Psoas muscle (tissue), 8 donors: ENCODE measurements at regions of chr1 and their contacts with region 1.

Region 1: DNA sequence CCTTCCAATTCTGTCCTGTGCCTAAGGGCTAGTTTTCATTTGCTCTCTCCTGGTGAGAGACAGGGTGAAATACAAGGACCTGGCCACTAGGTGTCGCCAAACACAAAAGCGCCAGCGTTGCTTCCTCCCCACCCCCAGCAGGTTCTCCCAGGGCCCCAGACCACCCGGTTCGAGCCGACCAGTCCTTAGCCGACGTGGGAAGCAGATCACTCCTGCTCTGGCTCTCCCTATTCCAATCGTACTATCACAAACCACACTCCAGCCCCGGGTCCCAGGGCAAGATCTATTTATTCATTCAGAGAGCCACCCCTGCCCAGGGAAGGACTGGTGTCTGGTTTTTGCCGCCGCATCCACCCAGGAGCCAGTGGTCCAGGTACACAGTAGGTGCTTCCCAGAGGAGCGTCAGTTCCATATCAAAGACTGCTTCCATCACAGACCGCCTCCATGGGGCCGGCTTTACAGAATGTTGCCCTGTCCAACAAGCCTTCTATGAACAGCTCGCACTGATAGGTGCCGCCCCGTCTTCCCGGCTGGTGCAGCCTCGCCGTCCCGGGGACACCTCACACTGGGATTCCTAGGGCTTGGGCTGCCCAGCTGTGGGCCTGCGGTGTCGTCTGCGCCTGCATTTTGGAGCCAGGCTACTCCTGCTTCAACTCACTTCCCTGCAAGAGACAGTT is 35.0 kb downstream of the CTNNBIP1 start:
- DNase-seq: peak; percentile 71 to 81
- ATAC-seq: peak; percentile 77 to 90 (median 81)
- H3K4me3 ChIP-seq: peak overlapping the region; percentile 36
- H3K27ac ChIP-seq: no peak overlapping the region
- H3K4me1 ChIP-seq: peaks cover 28% of the 10 kb centered on the region
- H3K27me3 ChIP-seq: no peaks in the 10 kb centered on the region
- CTCF ChIP-seq: peak; percentile 94

Region 2: DNA sequence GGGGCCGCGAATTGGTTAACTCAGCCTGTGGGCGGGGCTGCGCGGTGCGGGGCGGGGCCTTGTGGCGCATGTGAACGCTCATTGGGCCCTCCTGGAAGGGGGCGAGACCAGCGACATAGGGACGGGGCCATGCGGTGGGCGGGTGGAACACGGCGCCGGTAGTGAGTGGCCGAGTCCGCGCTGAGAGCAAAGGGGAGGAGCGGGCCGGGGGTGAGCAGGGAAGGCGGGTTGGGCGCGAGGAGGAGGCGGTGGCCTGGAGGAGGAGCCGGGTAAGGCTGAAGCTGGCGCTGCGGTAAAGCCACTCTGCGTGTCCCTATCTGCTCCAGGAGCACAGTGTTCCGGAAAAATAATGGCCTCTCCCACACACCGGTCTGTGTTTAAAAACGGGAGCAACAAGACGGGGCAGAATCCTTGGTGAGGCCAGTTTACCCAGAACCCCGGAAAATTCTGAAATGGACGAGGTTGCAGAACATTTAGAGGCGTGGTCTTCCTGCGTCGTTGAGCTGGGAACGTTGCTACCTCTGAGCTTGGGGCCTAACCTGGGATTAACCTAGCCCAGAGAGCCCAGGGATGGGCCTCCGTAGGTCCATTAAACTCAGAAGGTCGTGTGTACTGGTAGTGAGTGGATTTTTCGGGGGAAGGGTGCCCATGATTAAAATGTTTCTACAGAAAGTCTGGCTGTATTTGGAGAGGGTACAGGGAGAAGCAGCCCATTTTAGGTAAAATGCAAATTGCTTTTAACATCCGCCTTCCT is 35.5 kb after region 1 on chr1:
- intact Hi-C with region 1: loop called (anchors 5 kb)
- DNase-seq: peak; percentile 100
- ATAC-seq: peak; percentile 96 to 98 (median 98)
- H3K4me3 ChIP-seq: peak overlapping the region; percentile 63
- H3K27ac ChIP-seq: peak overlapping the region; percentile 78
- H3K4me1 ChIP-seq: peaks cover 13% of the 10 kb centered on the region
- H3K27me3 ChIP-seq: no peaks in the 10 kb centered on the region
- CTCF ChIP-seq: no peak

Region 3: GRCh38 chr1:9929431-9930385 is 54.6 kb after region 1 on chr1:
- intact Hi-C with region 1: no loop called
- DNase-seq: no peak
- ATAC-seq: no peak
- H3K4me3 ChIP-seq: no peak overlapping the region
- H3K27ac ChIP-seq: no peak overlapping the region
- H3K4me1 ChIP-seq: no peaks in the 10 kb centered on the region
- H3K27me3 ChIP-seq: no peaks in the 10 kb centered on the region
- CTCF ChIP-seq: no peak

Region 4: GRCh38 chr1:9942939-9943788 is 68.1 kb after region 1 on chr1 and contains the starts of genes LZIC and NMNAT1:
- intact Hi-C with region 1: loop called (anchors 5 to 10 kb)
- DNase-seq: peak; percentile 93 to 96
- ATAC-seq: peak; percentile 98 to 100 (median 99)
- H3K4me3 ChIP-seq: peak within 1 kb of the TSS; percentile 91
- H3K27ac ChIP-seq: peak within 1 kb of the TSS; percentile 91
- H3K4me1 ChIP-seq: peaks cover 31% of the 10 kb centered on the region
- H3K27me3 ChIP-seq: no peaks in the 10 kb centered on the region
- CTCF ChIP-seq: no peak
- total RNA-seq, gene LZIC: 17.6 to 24.9 (median 21.1) TPM
- total RNA-seq, gene NMNAT1: 8.0 to 18.2 (median 14.0) TPM

Region 5: GRCh38 chr1:10128101-10128765 is 253.1 kb after region 1 on chr1:
- intact Hi-C with region 1: no loop called
- DNase-seq: no peak
- ATAC-seq: no peak
- H3K4me3 ChIP-seq: no peak overlapping the region
- H3K27ac ChIP-seq: no peak overlapping the region
- H3K4me1 ChIP-seq: peaks cover 7% of the 10 kb centered on the region
- H3K27me3 ChIP-seq: no peaks in the 10 kb centered on the region
- CTCF ChIP-seq: no peak